HEK293 (cell line): ENCODE measurements at regions of chr14 and their contacts with region 1.

Region 1: GRCh38 chr14:103808403-103809001 is 38.9 kb downstream of the PPP1R13B start:
- H3K4me3 ChIP-seq: no peak overlapping the region
- H3K27ac ChIP-seq: no peak overlapping the region
- H3K4me1 ChIP-seq: no peaks in the 10 kb centered on the region
- CTCF ChIP-seq: peak; percentile 71; the same call in 1 of the 2 replicates

Region 2: DNA sequence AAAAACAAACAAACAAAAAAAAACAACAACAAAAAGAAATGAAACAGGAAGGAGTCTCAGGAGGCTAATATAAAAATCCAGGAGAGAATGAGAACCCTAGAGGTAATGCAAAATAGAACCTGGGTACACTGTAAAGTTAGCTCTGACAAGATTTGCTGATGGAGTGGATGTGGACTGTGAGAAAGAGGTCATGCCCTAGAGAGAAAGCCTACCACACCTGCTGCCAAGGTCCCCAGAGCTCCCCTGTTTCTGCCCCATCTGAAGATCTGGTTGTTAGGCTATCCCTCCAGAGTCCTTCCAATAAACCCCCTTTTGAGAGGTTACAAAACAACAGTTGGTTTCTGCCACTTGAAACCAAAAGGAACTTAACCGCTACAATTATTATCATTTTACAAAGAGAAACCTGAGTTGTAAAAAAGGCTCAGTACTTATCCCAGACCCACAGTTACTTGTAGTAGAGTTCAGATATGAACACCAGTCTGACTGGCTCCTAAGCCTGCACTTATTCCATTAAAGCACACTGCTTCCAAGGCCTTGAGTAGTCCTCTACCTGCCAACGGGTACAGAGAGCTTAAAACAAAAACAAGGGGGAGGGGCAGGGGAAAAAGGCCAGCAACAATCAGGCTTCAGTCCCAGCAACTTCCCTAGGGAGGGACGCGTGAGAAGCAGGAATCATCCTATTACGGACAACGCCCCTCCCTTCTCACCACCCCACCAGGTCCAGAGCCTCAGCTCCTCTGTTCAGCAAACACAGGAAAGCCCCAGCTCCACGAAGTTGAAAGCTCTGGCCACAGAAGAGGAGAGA is 11.2 kb after region 1 on chr14:
- CTCF ChIA-PET with region 1: interaction called, 13 read pairs
- POLR2A ChIA-PET with region 1: interaction called, 5 read pairs
- H3K4me3 ChIP-seq: no peak overlapping the region
- H3K27ac ChIP-seq: peak overlapping the region; percentile 76
- H3K4me1 ChIP-seq: peaks cover 39% of the 10 kb centered on the region
- CTCF ChIP-seq: no peak

Region 3: GRCh38 chr14:103910262-103910935 is 101.9 kb after region 1 on chr14:
- CTCF ChIA-PET with region 1: interaction called, 65 read pairs
- POLR2A ChIA-PET with region 1: interaction called, 5 read pairs
- H3K4me3 ChIP-seq: no peak overlapping the region
- H3K27ac ChIP-seq: no peak overlapping the region
- H3K4me1 ChIP-seq: no peaks in the 10 kb centered on the region
- CTCF ChIP-seq: peak; percentile 83

Region 4: GRCh38 chr14:103973354-103973753 is 164.9 kb after region 1 on chr14:
- CTCF ChIA-PET with region 1: interaction called, 43 read pairs
- POLR2A ChIA-PET with region 1: no interaction called
- H3K4me3 ChIP-seq: no peak overlapping the region
- H3K27ac ChIP-seq: no peak overlapping the region
- H3K4me1 ChIP-seq: no peaks in the 10 kb centered on the region
- CTCF ChIP-seq: no peak

Region 5: DNA sequence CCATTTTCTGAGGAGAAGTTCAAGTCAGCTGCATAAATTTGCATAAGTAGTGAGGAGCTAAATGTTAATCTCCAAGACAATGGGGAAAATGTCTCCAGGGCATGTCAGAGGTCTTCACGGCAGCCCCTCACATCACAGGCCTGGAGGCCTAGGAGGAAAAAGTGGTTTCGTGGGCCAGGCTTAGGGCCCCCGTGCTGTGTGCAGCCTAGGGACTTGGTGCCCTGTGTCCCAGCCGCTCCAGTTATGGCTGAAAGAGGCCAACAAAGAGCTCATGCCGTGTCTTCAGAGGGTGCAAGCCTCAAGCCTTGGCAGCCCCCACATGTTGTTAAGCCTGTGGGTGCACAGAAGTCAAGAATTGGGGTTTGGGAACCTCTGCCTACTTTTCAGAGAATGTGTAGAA is 175.7 kb after region 1 on chr14:
- CTCF ChIA-PET with region 1: interaction called, 43 read pairs
- POLR2A ChIA-PET with region 1: no interaction called
- H3K4me3 ChIP-seq: no peak overlapping the region
- H3K27ac ChIP-seq: no peak overlapping the region
- H3K4me1 ChIP-seq: no peaks in the 10 kb centered on the region
- CTCF ChIP-seq: no peak

Region 6: DNA sequence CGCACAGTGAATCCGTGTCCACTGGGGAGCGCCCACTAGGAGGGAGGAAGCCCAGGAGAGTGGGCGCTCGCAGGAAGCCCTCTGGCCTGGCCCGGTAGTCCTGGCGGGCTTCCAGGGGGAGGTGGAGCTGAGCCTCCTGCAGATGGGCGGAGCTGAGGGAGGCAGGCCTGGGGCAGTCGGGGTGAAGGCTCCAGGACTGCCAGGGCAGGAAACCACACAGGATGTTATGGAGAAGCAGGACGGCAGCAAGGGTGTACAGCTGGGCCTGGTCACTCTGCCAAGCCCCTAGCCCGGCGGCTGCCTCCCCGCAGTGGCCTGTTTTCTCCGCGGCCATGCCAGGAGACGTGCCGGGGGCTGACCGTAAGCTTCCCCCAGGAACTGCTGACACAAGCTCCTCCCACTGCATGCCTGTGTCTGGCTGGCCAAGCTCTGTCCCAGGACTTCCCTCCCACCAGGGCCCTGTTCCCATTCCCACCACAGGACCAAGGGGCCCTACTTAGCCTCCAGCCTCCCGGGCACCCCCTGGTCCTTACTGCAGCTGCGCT is 627.6 kb after region 1 on chr14:
- CTCF ChIA-PET with region 1: no interaction called
- POLR2A ChIA-PET with region 1: no interaction called
- H3K4me3 ChIP-seq: no peak overlapping the region
- H3K27ac ChIP-seq: no peak overlapping the region
- H3K4me1 ChIP-seq: no peaks in the 10 kb centered on the region
- CTCF ChIP-seq: no peak